ENCODE measurements at regions of chr6 and their contacts with region 1.

Region 1: DNA sequence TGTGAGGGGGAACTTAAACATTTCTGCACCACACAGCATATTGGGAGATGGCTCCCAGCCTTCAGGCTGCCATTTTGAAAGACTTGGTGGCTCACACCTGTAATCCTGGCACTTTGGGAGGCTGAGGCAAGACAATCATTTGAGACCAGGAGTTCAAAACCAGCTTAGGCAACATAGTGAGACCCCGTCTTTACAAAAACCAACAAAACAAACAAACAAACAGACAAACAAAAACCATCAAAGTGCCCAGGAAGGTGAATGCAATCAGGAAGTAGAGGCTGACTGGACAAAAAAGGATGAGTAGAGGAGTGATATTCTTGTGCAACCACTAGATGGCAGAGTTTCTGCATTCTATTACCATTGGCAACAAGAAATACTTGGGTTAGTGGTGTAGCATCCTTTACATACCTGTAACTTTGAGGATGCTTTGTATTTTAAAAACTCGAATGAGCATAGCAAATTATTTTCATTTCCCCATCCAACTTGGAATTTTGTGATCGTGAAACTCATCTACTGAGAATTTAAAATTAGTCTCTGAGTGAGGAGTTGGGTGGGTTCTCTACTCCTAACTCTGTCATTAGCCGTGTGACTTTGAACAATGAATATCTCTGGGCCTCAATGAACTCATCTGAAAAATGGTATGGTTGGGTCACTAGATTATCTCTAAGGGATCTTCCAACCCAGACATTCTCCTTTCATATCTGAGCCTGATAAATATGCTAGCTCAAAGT is 84.4 kb downstream of the CRYBG1 start:
- DNase-seq: peak in 4 of 5 donors; percentile 68 to 77 (median 72)
- H3K4me3 ChIP-seq: no peak overlapping the region
- H3K4me3 Mint-ChIP-seq: no peak overlapping the region
- H3K27ac ChIP-seq: no peak overlapping the region
- H3K27ac Mint-ChIP-seq: no peak overlapping the region
- H3K4me1 ChIP-seq: peaks cover 5% of the 10 kb centered on the region
- H3K4me1 Mint-ChIP-seq: peaks cover 4 to 13% (median 11%) of the 10 kb centered on the region in 4 donors
- H3K27me3 ChIP-seq: no peaks in the 10 kb centered on the region
- H3K27me3 Mint-ChIP-seq: peaks cover 11 to 19% of the 10 kb centered on the region in 2 donors

Region 2: DNA sequence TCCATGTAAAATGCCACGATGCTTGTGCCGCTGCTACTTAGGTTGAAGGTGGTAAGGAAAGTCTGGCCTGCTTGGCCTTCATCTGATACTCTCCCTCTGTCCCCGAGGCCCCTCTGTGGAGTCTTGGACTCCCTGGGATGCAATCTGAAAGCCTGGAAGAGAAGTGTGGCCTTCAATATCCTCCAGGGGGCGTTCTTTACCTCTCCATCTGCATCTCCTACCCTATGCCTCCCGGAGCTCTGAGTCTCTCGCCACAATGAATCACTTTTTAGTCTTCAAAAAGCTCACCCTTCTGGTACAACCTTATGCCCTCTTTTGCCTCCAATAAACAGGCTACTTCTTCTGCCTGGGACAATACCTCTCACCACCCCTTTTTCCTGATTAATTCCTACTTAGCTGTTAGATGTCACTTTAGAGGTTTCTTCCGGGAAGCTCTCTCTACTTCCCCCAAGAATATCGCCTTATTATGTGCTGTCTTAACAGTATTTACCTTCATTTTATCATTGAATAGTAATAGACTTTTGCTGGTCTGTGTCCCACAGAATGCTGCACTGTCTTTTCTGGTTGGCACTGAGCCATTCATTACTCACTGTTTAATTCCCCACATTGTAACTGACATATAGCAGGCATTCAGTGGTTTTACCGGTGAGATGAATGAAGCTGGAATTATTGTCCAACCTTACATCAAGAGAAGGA is 105.5 kb before region 1 on chr6:
- CTCF ChIA-PET with region 1: interaction called, 21 read pairs
- POLR2A ChIA-PET with region 1: no interaction called
- intact Hi-C with region 1: loop called (anchors 1 kb)
- DNase-seq: peak; percentile 28 to 54 (median 44)
- H3K4me3 ChIP-seq: no peak overlapping the region
- H3K4me3 Mint-ChIP-seq: peak overlapping the region in 7 of 8 donors; percentile 4 to 49 (median 29)
- H3K27ac ChIP-seq: no peak overlapping the region
- H3K27ac Mint-ChIP-seq: peak overlapping the region in 2 of 7 donors; percentile 42 to 54
- H3K4me1 ChIP-seq: peaks cover 5% of the 10 kb centered on the region
- H3K4me1 Mint-ChIP-seq: peaks cover 0 to 6% (median 3%) of the 10 kb centered on the region in 4 donors
- H3K27me3 ChIP-seq: no peaks in the 10 kb centered on the region
- H3K27me3 Mint-ChIP-seq: peaks cover 12 to 23% of the 10 kb centered on the region in 2 donors

Region 3: DNA sequence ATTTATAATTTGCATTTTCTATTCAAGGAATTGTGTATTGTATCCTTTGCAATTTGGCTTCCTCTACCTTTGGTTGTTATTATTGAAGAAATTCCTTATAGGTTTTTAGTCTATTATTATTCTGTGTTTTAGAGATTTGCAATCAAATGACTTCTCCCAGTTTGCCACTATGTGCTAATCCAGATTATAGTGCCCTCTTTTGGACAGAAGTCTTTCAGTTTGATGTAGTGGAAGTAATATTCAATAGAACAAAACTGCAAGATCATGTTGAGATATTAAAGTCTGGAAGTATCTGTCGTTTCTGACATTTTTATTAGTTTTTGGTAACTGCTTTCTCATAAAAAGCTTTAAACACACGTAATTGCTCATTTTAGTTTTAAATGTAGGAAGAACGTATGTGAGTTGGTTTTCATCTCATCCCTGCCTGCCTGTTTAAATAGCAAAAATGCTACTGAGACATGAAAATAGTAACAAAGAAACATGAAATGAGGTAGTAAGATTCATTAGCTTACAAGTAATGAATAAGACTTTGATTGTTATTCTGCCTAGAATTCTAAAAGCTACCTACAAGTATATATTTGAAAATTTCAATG is 111.5 kb after region 1 on chr6:
- CTCF ChIA-PET with region 1: interaction called, 81 read pairs
- POLR2A ChIA-PET with region 1: no interaction called
- intact Hi-C with region 1: loop called (anchors 1 kb)
- DNase-seq: peak in 4 of 5 donors; percentile 43 to 46 (median 45)
- H3K4me3 ChIP-seq: no peak overlapping the region
- H3K4me3 Mint-ChIP-seq: no peak overlapping the region
- H3K27ac ChIP-seq: no peak overlapping the region
- H3K27ac Mint-ChIP-seq: peak overlapping the region in 3 of 7 donors; percentile 2 to 75 (median 68)
- H3K4me1 ChIP-seq: no peaks in the 10 kb centered on the region
- H3K4me1 Mint-ChIP-seq: peaks cover 4 to 9% (median 7%) of the 10 kb centered on the region in 4 donors
- H3K27me3 ChIP-seq: no peaks in the 10 kb centered on the region
- H3K27me3 Mint-ChIP-seq: no peaks in the 10 kb centered on the region

Region 4: GRCh38 chr6:106979427-106979884 is 534.5 kb after region 1 on chr6:
- CTCF ChIA-PET with region 1: interaction called, 89 read pairs
- POLR2A ChIA-PET with region 1: no interaction called
- intact Hi-C with region 1: loop called (anchors 1 kb)
- DNase-seq: peak; percentile 58 to 68 (median 62)
- H3K4me3 ChIP-seq: no peak overlapping the region
- H3K4me3 Mint-ChIP-seq: no peak overlapping the region
- H3K27ac ChIP-seq: no peak overlapping the region
- H3K27ac Mint-ChIP-seq: no peak overlapping the region
- H3K4me1 ChIP-seq: peaks cover 7% of the 10 kb centered on the region
- H3K4me1 Mint-ChIP-seq: peaks cover 0 to 9% (median 5%) of the 10 kb centered on the region in 4 donors
- H3K27me3 ChIP-seq: peaks cover 3% of the 10 kb centered on the region
- H3K27me3 Mint-ChIP-seq: peaks cover 22 to 23% of the 10 kb centered on the region in 2 donors

Region 5: DNA sequence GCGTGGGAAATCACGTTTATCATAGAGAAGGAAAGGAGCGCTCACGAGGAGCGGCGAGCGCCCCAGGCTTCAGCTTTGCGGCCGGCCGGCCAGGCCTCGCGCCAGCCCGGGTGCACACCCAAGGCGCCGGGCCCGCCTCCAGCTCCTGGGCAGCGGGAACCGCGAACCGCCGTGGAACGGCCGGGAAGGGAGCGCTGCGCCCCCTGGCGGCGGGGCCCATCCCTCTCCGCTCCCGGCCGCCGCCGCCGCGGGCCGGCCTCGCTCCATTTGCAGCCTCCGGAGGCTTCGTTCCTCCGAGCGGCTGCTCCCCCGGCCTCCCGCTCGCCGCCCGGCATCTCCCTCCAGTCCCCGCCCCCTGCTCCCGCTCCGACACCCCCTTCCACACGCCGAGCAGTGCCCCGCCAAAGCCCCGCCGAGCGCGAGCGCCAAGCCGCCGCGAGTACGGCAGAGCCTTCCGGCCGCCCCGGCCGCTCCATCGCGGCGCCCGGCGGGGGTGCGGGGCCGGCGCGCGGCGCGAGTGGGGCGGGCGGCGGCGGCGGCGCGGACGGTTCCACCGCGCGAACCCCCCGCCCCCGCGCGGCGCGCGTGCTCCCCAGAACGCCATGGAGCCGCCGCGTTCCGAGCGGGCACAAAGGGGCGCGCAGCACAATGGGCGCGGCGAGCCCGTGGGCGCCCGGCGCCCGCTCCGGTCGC is 669.4 kb after region 1 on chr6:
- CTCF ChIA-PET with region 1: no interaction called
- POLR2A ChIA-PET with region 1: no interaction called
- intact Hi-C with region 1: loop called (anchors 10 kb)
- DNase-seq: peak; percentile 58 to 77 (median 68)
- H3K4me3 ChIP-seq: peak overlapping the region in 1 of 2 donors; percentile 23
- H3K4me3 Mint-ChIP-seq: peak overlapping the region; percentile 76 to 89 (median 82)
- H3K27ac ChIP-seq: no peak overlapping the region
- H3K27ac Mint-ChIP-seq: peak overlapping the region in 4 of 7 donors; percentile 61 to 81 (median 70)
- H3K4me1 ChIP-seq: peaks cover 19% of the 10 kb centered on the region
- H3K4me1 Mint-ChIP-seq: peaks cover 8 to 18% (median 13%) of the 10 kb centered on the region in 4 donors
- H3K27me3 ChIP-seq: peaks cover 5% of the 10 kb centered on the region
- H3K27me3 Mint-ChIP-seq: peaks cover 3 to 5% of the 10 kb centered on the region in 2 donors